IMR-90 (cell line): ENCODE measurements at regions of chr2 and their contacts with region 1.

Region 1: GRCh38 chr2:156634481-156634880 is 198.3 kb downstream of the GPD2 start:
- DNase-seq: no peak
- ATAC-seq: no peak
- H3K4me3 ChIP-seq: no peak overlapping the region
- H3K27ac ChIP-seq: no peak overlapping the region
- H3K4me1 ChIP-seq: no peaks in the 10 kb centered on the region
- H3K27me3 ChIP-seq: no peaks in the 10 kb centered on the region
- CTCF ChIP-seq: no peak
- POLR2A ChIP-seq: no peak
- RAD21 ChIP-seq: no peak

Region 2: GRCh38 chr2:156505696-156506095 is 128.8 kb before region 1 on chr2:
- CTCF ChIA-PET with region 1: no interaction called
- POLR2A ChIA-PET with region 1: interaction called, 18 read pairs
- dilution Hi-C with region 1: no loop called
- in situ Hi-C with region 1: no loop called
- intact Hi-C with region 1: no loop called
- DNase-seq: no peak
- ATAC-seq: no peak
- H3K4me3 ChIP-seq: no peak overlapping the region
- H3K27ac ChIP-seq: no peak overlapping the region
- H3K4me1 ChIP-seq: no peaks in the 10 kb centered on the region
- H3K27me3 ChIP-seq: no peaks in the 10 kb centered on the region
- CTCF ChIP-seq: no peak
- POLR2A ChIP-seq: no peak
- RAD21 ChIP-seq: no peak

Region 3: DNA sequence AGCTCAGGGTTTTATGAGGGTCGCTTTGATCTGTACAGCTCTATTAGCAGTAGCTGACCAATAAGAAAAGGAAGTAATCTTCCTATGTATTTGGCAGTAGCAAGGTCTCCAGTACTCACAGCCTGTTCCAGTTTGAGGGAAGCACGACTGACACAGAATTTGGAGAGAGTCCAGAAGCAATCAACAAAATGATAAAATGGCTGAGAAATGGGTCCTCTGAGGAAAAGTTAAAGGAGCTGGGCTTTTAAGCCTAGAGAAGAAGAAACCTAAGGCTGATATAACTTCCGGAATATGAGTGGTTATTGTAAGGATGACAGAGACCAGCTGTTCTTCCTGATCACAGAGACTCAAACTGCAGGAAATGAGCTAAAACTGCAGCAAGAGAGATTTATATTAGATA is 184.5 kb after region 1 on chr2:
- CTCF ChIA-PET with region 1: no interaction called
- POLR2A ChIA-PET with region 1: no interaction called
- dilution Hi-C with region 1: no loop called
- in situ Hi-C with region 1: no loop called
- intact Hi-C with region 1: no loop called
- DNase-seq: peak; percentile 67
- ATAC-seq: peak; percentile 81
- H3K4me3 ChIP-seq: no peak overlapping the region
- H3K27ac ChIP-seq: no peak overlapping the region; the same call in 1 of the 2 replicates
- H3K4me1 ChIP-seq: peaks cover 2% of the 10 kb centered on the region; the same call in 1 of the 2 replicates
- H3K27me3 ChIP-seq: no peaks in the 10 kb centered on the region
- CTCF ChIP-seq: no peak
- POLR2A ChIP-seq: no peak
- RAD21 ChIP-seq: no peak

Region 4: DNA sequence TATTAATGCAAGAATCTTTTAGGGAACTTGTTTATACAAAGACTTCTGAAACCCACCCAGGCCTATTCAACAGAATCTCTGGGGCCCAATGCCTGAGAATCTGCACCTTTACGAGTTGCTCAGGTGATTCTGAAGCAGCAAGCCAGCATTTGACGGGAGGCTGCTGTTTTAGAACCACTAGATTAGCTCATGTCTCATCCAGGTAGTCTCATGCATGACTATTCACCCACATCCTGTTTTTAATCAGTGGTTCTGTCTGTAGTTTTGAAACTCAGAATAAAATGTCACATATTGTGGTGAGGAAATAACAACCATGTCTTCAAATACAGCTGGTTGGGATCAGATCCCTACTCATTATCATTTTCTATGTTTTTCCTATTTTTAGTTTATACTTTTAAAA is 769.9 kb after region 1 on chr2:
- CTCF ChIA-PET with region 1: no interaction called
- POLR2A ChIA-PET with region 1: no interaction called
- dilution Hi-C with region 1: no loop called
- in situ Hi-C with region 1: no loop called
- intact Hi-C with region 1: no loop called
- DNase-seq: no peak
- ATAC-seq: no peak
- H3K4me3 ChIP-seq: no peak overlapping the region
- H3K27ac ChIP-seq: no peak overlapping the region
- H3K4me1 ChIP-seq: no peaks in the 10 kb centered on the region
- H3K27me3 ChIP-seq: no peaks in the 10 kb centered on the region
- CTCF ChIP-seq: no peak
- POLR2A ChIP-seq: no peak
- RAD21 ChIP-seq: no peak